Activated CD4-positive, alpha-beta T cell treated with anti-CD3 and anti-CD28 coated beads, Interleukin-2, amount 10 ng/mL, durations not matched to agents 24 days and 14 days (primary cell): ENCODE measurements at regions of chr12 and their contacts with region 1.

Region 1: GRCh38 chr12:14913381-14913781 is 25.0 kb downstream of the ERP27 start:
- DNase-seq: no peak
- H3K4me3 Mint-ChIP-seq: no peak overlapping the region
- H3K27ac Mint-ChIP-seq: no peak overlapping the region
- H3K4me1 Mint-ChIP-seq: peaks cover 19% of the 10 kb centered on the region
- H3K27me3 Mint-ChIP-seq: no peaks in the 10 kb centered on the region

Region 2: DNA sequence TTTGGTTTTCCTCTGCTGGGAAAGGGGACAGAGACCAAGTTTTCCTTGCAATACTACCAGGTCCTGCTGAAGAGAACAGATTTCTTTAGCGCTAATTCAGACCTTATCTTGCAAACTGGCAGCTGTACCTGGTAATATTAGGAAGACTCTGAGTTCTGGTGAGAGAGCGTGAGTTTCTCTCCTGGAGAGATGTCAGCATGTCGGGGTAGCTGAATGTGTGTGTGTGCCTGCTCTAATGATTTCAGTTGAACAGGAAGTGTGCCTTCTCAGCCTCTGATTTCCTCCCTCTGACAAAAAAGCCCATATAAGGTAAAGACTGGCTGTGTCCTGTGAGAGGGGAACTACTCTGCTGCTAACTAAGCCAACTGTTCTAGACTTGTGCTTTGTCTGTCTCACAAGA is 35.3 kb after region 1 on chr12:
- intact Hi-C with region 1: loop called (anchors 1 kb)
- DNase-seq: peak; percentile 89
- H3K4me3 Mint-ChIP-seq: peak overlapping the region; percentile 79
- H3K27ac Mint-ChIP-seq: peak overlapping the region; percentile 95
- H3K4me1 Mint-ChIP-seq: peaks cover 74% of the 10 kb centered on the region
- H3K27me3 Mint-ChIP-seq: no peaks in the 10 kb centered on the region